CD4-positive, alpha-beta T cell (primary cell): ENCODE measurements at regions of chr4 and their contacts with region 1.

Region 1: GRCh38 chr4:20684852-20685763 is 15.2 kb upstream of the PACRGL start:
- DNase-seq: peak in 3 of 14 experiments; percentile 28 to 42 (median 38)
- ATAC-seq: no peak
- H3K4me3 ChIP-seq: no peak overlapping the region
- H3K4me3 Mint-ChIP-seq: no peak overlapping the region
- H3K27ac ChIP-seq: no peak overlapping the region
- H3K27ac Mint-ChIP-seq: no peak overlapping the region
- H3K4me1 ChIP-seq: no peaks in the 10 kb centered on the region
- H3K4me1 Mint-ChIP-seq: no peaks in the 10 kb centered on the region
- H3K27me3 ChIP-seq: no peaks in the 10 kb centered on the region
- H3K27me3 Mint-ChIP-seq: peaks cover 12% of the 10 kb centered on the region
- CTCF ChIP-seq: peak; percentile 73

Region 2: DNA sequence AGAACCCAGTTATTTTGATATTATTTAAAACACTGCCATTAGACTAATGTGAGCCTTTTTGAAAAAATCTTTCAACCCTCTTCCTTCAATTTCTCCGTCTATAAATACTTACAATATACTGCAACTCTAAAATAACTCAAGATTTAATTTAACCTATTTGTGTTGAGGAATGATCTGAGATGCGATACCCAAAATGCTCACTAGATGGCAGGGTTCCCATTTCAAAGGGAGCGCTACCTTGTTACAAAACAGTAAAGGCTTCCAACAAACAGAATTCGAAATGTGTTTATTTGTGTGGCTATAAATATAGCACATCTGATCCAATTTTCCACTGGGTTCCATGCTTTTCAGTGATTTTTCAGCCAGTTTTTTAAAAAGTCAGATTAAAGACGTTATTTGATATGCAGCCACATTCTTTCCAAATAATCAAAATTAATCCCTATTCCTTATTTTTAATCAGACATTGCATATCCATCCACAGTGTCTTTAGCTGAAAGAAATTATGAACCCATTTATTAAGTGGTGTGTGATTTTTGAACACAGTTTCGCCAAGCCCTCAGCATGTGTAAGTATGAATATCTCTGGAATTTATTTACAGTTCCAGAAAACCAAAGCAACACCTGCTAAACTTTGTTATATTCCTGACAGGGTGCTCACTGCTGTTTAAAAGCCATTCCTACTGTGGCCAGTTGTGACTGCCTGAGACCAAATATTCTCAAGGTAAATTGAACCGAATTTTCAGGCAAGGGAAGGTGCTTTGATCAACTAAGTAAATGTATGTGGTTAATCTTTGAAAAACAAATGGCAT is 1995.6 kb before region 1 on chr4:
- CTCF ChIA-PET with region 1: no interaction called
- POLR2A ChIA-PET with region 1: no interaction called
- intact Hi-C with region 1: loop called in 1 of 2 experiments (anchors 2 kb)
- DNase-seq: peak in 8 of 14 experiments; percentile 4 to 52 (median 22)
- ATAC-seq: peak; percentile 49
- H3K4me3 ChIP-seq: no peak overlapping the region
- H3K4me3 Mint-ChIP-seq: no peak overlapping the region
- H3K27ac ChIP-seq: no peak overlapping the region
- H3K27ac Mint-ChIP-seq: no peak overlapping the region
- H3K4me1 ChIP-seq: no peaks in the 10 kb centered on the region
- H3K4me1 Mint-ChIP-seq: no peaks in the 10 kb centered on the region
- H3K27me3 ChIP-seq: no peaks in the 10 kb centered on the region
- H3K27me3 Mint-ChIP-seq: peaks cover 12% of the 10 kb centered on the region
- CTCF ChIP-seq: peak; percentile 94

Region 3: GRCh38 chr4:19224820-19225219 is 1460.3 kb before region 1 on chr4:
- CTCF ChIA-PET with region 1: no interaction called
- POLR2A ChIA-PET with region 1: no interaction called
- intact Hi-C with region 1: loop called in 1 of 2 experiments (anchors 10 kb)
- DNase-seq: no peak
- ATAC-seq: no peak
- H3K4me3 ChIP-seq: no peak overlapping the region
- H3K4me3 Mint-ChIP-seq: no peak overlapping the region
- H3K27ac ChIP-seq: no peak overlapping the region
- H3K27ac Mint-ChIP-seq: no peak overlapping the region
- H3K4me1 ChIP-seq: no peaks in the 10 kb centered on the region
- H3K4me1 Mint-ChIP-seq: no peaks in the 10 kb centered on the region
- H3K27me3 ChIP-seq: no peaks in the 10 kb centered on the region
- H3K27me3 Mint-ChIP-seq: no peaks in the 10 kb centered on the region
- CTCF ChIP-seq: no peak

Region 4: GRCh38 chr4:20422398-20422797 is 262.7 kb before region 1 on chr4:
- CTCF ChIA-PET with region 1: no interaction called
- POLR2A ChIA-PET with region 1: no interaction called
- intact Hi-C with region 1: loop called (anchors 1 to 5 kb)
- DNase-seq: peak in 8 of 14 experiments; percentile 1 to 56 (median 8)
- ATAC-seq: peak; percentile 37
- H3K4me3 ChIP-seq: no peak overlapping the region
- H3K4me3 Mint-ChIP-seq: no peak overlapping the region
- H3K27ac ChIP-seq: no peak overlapping the region
- H3K27ac Mint-ChIP-seq: no peak overlapping the region
- H3K4me1 ChIP-seq: no peaks in the 10 kb centered on the region
- H3K4me1 Mint-ChIP-seq: peaks cover 6% of the 10 kb centered on the region
- H3K27me3 ChIP-seq: no peaks in the 10 kb centered on the region
- H3K27me3 Mint-ChIP-seq: no peaks in the 10 kb centered on the region
- CTCF ChIP-seq: peak; percentile 24

Region 5: GRCh38 chr4:20700007-20700761 is 15.1 kb after region 1 on chr4 and contains the start of gene PACRGL:
- CTCF ChIA-PET with region 1: interaction called, 11 read pairs
- POLR2A ChIA-PET with region 1: interaction called, 4 read pairs
- intact Hi-C with region 1: no loop called
- DNase-seq: peak; percentile 83 to 97 (median 90)
- ATAC-seq: peak; percentile 97
- H3K4me3 ChIP-seq: peak within 1 kb of the TSS; percentile 75
- H3K4me3 Mint-ChIP-seq: peak within 1 kb of the TSS; percentile 96
- H3K27ac ChIP-seq: peak within 1 kb of the TSS; percentile 29 to 84
- H3K27ac Mint-ChIP-seq: peak within 1 kb of the TSS; percentile 94
- H3K4me1 ChIP-seq: peaks cover 16% of the 10 kb centered on the region
- H3K4me1 Mint-ChIP-seq: peaks cover 48% of the 10 kb centered on the region
- H3K27me3 ChIP-seq: no peaks in the 10 kb centered on the region
- H3K27me3 Mint-ChIP-seq: peaks cover 5% of the 10 kb centered on the region
- CTCF ChIP-seq: no peak
- total RNA-seq, gene PACRGL: 7.2 to 10.4 TPM

Region 6: DNA sequence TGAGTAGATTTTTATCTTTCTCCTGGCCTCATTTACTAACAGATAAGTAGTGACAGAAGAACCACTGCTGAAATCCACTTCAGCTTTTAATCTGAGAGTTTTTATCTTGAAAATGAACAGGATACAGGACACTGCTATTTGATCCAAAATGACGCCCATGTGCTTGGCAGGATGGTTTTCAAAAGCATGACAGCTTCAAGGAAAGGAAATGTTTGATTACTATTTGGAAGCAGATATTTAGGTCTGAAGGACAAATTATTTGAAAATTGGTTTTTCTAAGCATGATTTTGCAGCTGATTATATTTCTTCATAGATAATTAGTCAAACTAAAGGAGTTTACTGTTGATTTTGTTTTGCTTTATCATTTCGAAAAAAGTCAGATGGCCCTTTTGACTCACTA is 26.2 kb after region 1 on chr4:
- CTCF ChIA-PET with region 1: no interaction called
- POLR2A ChIA-PET with region 1: no interaction called
- intact Hi-C with region 1: no loop called
- DNase-seq: no peak
- ATAC-seq: no peak
- H3K4me3 ChIP-seq: no peak overlapping the region
- H3K4me3 Mint-ChIP-seq: no peak overlapping the region
- H3K27ac ChIP-seq: no peak overlapping the region
- H3K27ac Mint-ChIP-seq: no peak overlapping the region
- H3K4me1 ChIP-seq: no peaks in the 10 kb centered on the region
- H3K4me1 Mint-ChIP-seq: no peaks in the 10 kb centered on the region
- H3K27me3 ChIP-seq: no peaks in the 10 kb centered on the region
- H3K27me3 Mint-ChIP-seq: no peaks in the 10 kb centered on the region
- CTCF ChIP-seq: no peak